ENCODE measurements at regions of chr14 and their contacts with region 1.

Region 1: DNA sequence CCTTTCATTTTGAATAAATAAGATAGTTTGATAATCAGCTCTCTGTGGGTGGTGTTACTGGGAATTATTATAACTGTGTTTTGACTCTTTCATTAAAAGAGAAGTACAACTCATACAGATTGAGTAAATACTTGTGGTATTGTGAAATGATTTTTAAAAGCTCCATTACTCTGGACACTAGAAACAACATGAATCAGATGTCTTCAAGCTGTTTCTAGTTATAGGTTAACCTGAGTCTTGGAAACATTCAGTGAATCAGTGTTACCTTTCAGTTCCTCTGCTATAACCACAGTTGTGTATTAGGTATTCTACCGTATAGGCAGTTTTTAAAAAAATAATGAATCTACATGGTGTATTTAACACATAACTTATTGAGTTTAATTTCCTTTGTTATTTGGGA is 128.4 kb upstream of the SSTR1 start:
- DNase-seq: no peak
- ATAC-seq: peak in 1 of 3 donors; percentile 22
- H3K4me3 ChIP-seq: no peak overlapping the region
- H3K4me3 Mint-ChIP-seq: peak overlapping the region; percentile 72
- H3K27ac ChIP-seq: no peak overlapping the region
- H3K27ac Mint-ChIP-seq: peak overlapping the region; percentile 80 to 84
- H3K4me1 ChIP-seq: peaks cover 20% of the 10 kb centered on the region
- H3K4me1 Mint-ChIP-seq: peaks cover 43 to 46% of the 10 kb centered on the region in 2 donors
- H3K27me3 ChIP-seq: no peaks in the 10 kb centered on the region
- H3K27me3 Mint-ChIP-seq: peaks cover 0 to 3% of the 10 kb centered on the region in 2 donors
- CTCF ChIP-seq: no peak

Region 2: GRCh38 chr14:38065106-38065762 is 14.0 kb before region 1 on chr14:
- intact Hi-C with region 1: loop called (anchors 1 kb)
- DNase-seq: peak; percentile 57 to 91
- ATAC-seq: peak; percentile 92 to 98 (median 94)
- H3K4me3 ChIP-seq: no peak overlapping the region
- H3K4me3 Mint-ChIP-seq: peak overlapping the region; percentile 80
- H3K27ac ChIP-seq: peak overlapping the region; percentile 92
- H3K27ac Mint-ChIP-seq: peak overlapping the region; percentile 93 to 97
- H3K4me1 ChIP-seq: peaks cover 7% of the 10 kb centered on the region
- H3K4me1 Mint-ChIP-seq: peaks cover 16 to 33% of the 10 kb centered on the region in 2 donors
- H3K27me3 ChIP-seq: no peaks in the 10 kb centered on the region
- H3K27me3 Mint-ChIP-seq: no peaks in the 10 kb centered on the region
- CTCF ChIP-seq: no peak

Region 3: GRCh38 chr14:38121320-38122020 is 42.2 kb after region 1 on chr14:
- intact Hi-C with region 1: loop called (anchors 2 kb)
- DNase-seq: no peak
- ATAC-seq: no peak
- H3K4me3 ChIP-seq: no peak overlapping the region
- H3K4me3 Mint-ChIP-seq: peak overlapping the region; percentile 19
- H3K27ac ChIP-seq: no peak overlapping the region
- H3K27ac Mint-ChIP-seq: peak overlapping the region; percentile 34 to 57
- H3K4me1 ChIP-seq: peaks cover 4% of the 10 kb centered on the region
- H3K4me1 Mint-ChIP-seq: peaks cover 46 to 64% of the 10 kb centered on the region in 2 donors
- H3K27me3 ChIP-seq: no peaks in the 10 kb centered on the region
- H3K27me3 Mint-ChIP-seq: no peaks in the 10 kb centered on the region
- CTCF ChIP-seq: no peak

Region 4: GRCh38 chr14:38297681-38298080 is 218.4 kb after region 1 on chr14:
- intact Hi-C with region 1: no loop called
- DNase-seq: no peak
- ATAC-seq: no peak
- H3K4me3 ChIP-seq: no peak overlapping the region
- H3K4me3 Mint-ChIP-seq: no peak overlapping the region
- H3K27ac ChIP-seq: no peak overlapping the region
- H3K27ac Mint-ChIP-seq: no peak overlapping the region
- H3K4me1 ChIP-seq: no peaks in the 10 kb centered on the region
- H3K4me1 Mint-ChIP-seq: no peaks in the 10 kb centered on the region
- H3K27me3 ChIP-seq: no peaks in the 10 kb centered on the region
- H3K27me3 Mint-ChIP-seq: no peaks in the 10 kb centered on the region
- CTCF ChIP-seq: no peak